Endothelial cell of umbilical vein (primary cell): ENCODE measurements at regions of chr14 and their contacts with region 1.

Region 1: DNA sequence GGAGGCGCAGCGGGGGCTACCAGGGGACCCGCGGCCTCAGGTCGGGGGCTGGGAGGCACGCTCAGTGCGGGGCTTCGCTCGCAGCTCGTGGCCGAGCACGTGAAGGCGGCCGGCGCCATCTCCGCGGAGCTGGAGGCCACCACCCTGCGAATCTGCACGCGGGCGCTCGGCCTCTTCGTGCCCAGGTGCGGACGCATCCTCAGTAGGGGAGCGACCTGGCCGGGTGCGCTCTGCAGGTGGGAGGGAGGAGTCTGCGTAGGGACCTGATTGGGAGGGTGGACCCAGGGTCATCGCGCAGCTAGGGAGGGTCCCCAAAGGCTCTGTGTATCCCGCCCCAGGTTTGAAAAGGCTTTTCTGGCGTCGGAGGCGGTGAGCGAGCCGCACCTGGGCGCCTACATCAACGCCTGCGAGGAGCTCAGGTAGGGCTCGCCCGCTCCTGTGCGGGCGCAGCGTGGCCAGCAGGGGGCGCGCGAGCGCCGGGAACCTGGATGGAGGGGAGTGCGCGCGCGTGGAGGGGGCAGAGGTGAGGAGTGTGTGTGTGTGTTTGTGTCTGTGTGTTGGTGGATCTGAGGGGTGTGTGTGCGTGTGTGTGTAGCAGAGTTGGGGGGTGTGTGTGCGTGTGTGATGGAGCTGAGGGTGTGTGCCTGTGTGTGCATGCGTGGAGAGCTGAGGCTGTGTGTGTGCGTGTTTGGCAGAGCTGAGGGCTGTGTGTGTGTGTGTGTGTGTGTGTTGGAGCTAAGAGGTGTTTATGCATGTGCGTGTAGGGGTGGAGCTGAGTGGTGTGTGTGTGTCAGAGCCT is 10.3 kb downstream of the EXOC3L4 start:
- DNase-seq: no peak
- H3K4me3 ChIP-seq: no peak overlapping the region
- H3K27ac ChIP-seq: no peak overlapping the region
- H3K4me1 ChIP-seq: peaks cover 3% of the 10 kb centered on the region
- H3K27me3 ChIP-seq: peaks cover 28 to 29% of the 10 kb centered on the region in 2 experiments
- CTCF ChIP-seq: peak; percentile 99
- POLR2A ChIP-seq: no peak

Region 2: GRCh38 chr14:103057365-103058096 is 47.3 kb before region 1 on chr14 and contains the start of gene CDC42BPB:
- CTCF ChIA-PET with region 1: interaction called, 10 read pairs
- POLR2A ChIA-PET with region 1: no interaction called
- dilution Hi-C with region 1: no loop called
- intact Hi-C with region 1: no loop called
- DNase-seq: peak; percentile 89
- H3K4me3 ChIP-seq: peak within 1 kb of the TSS; percentile 93 to 96 (median 95)
- H3K27ac ChIP-seq: peak within 1 kb of the TSS; percentile 91
- H3K4me1 ChIP-seq: peaks cover 22% of the 10 kb centered on the region
- H3K27me3 ChIP-seq: no peaks in the 10 kb centered on the region
- CTCF ChIP-seq: no peak
- POLR2A ChIP-seq: no peak
- total RNA-seq, gene CDC42BPB: 131 and 136 TPM in 2 replicates

Region 3: GRCh38 chr14:103121846-103122584 is 17.2 kb after region 1 on chr14:
- CTCF ChIA-PET with region 1: interaction called, 86 read pairs
- POLR2A ChIA-PET with region 1: interaction called, 6 read pairs
- dilution Hi-C with region 1: no loop called
- intact Hi-C with region 1: loop called (anchors 2 kb)
- DNase-seq: peak; percentile 73
- H3K4me3 ChIP-seq: no peak overlapping the region
- H3K27ac ChIP-seq: peak overlapping the region; percentile 42
- H3K4me1 ChIP-seq: peaks cover 32% of the 10 kb centered on the region
- H3K27me3 ChIP-seq: no peaks in the 10 kb centered on the region
- CTCF ChIP-seq: no peak
- POLR2A ChIP-seq: no peak

Region 4: DNA sequence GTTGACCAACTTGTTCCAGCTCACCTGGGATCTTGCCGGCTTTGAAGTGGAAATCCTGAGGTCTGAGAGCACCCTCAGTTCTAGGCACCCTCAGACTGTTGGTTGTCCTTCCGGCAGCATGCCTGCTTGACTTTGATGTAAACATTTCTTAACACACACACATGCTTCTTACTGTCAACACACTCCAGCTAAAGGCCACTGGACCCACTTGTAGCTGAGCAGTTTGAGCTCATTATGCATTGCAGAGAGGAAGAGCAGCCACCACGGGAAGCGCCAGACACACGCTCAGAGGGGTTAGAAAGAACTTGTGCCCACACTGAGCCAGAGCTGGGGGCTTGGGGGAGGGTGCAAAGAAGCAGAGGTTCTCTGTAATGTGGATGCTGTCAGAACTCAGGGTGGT is 74.2 kb after region 1 on chr14:
- CTCF ChIA-PET with region 1: interaction called, 238 read pairs
- POLR2A ChIA-PET with region 1: no interaction called
- dilution Hi-C with region 1: no loop called
- intact Hi-C with region 1: no loop called
- DNase-seq: no peak
- H3K4me3 ChIP-seq: no peak overlapping the region
- H3K27ac ChIP-seq: no peak overlapping the region
- H3K4me1 ChIP-seq: no peaks in the 10 kb centered on the region
- H3K27me3 ChIP-seq: peaks cover 7 to 10% of the 10 kb centered on the region in 2 experiments
- CTCF ChIP-seq: no peak
- POLR2A ChIP-seq: no peak

Region 5: GRCh38 chr14:103232298-103232808 is 127.5 kb after region 1 on chr14:
- CTCF ChIA-PET with region 1: interaction called, 18 read pairs
- POLR2A ChIA-PET with region 1: no interaction called
- dilution Hi-C with region 1: no loop called
- intact Hi-C with region 1: no loop called
- DNase-seq: no peak
- H3K4me3 ChIP-seq: no peak overlapping the region
- H3K27ac ChIP-seq: no peak overlapping the region
- H3K4me1 ChIP-seq: peaks cover 15% of the 10 kb centered on the region
- H3K27me3 ChIP-seq: no peaks in the 10 kb centered on the region
- CTCF ChIP-seq: no peak
- POLR2A ChIP-seq: no peak

Region 6: GRCh38 chr14:103298620-103299019 is 193.8 kb after region 1 on chr14:
- CTCF ChIA-PET with region 1: interaction called, 257 read pairs
- POLR2A ChIA-PET with region 1: no interaction called
- dilution Hi-C with region 1: no loop called
- intact Hi-C with region 1: no loop called
- DNase-seq: no peak
- H3K4me3 ChIP-seq: no peak overlapping the region
- H3K27ac ChIP-seq: no peak overlapping the region
- H3K4me1 ChIP-seq: no peaks in the 10 kb centered on the region
- H3K27me3 ChIP-seq: no peaks in the 10 kb centered on the region
- CTCF ChIP-seq: no peak
- POLR2A ChIP-seq: no peak

Region 7: DNA sequence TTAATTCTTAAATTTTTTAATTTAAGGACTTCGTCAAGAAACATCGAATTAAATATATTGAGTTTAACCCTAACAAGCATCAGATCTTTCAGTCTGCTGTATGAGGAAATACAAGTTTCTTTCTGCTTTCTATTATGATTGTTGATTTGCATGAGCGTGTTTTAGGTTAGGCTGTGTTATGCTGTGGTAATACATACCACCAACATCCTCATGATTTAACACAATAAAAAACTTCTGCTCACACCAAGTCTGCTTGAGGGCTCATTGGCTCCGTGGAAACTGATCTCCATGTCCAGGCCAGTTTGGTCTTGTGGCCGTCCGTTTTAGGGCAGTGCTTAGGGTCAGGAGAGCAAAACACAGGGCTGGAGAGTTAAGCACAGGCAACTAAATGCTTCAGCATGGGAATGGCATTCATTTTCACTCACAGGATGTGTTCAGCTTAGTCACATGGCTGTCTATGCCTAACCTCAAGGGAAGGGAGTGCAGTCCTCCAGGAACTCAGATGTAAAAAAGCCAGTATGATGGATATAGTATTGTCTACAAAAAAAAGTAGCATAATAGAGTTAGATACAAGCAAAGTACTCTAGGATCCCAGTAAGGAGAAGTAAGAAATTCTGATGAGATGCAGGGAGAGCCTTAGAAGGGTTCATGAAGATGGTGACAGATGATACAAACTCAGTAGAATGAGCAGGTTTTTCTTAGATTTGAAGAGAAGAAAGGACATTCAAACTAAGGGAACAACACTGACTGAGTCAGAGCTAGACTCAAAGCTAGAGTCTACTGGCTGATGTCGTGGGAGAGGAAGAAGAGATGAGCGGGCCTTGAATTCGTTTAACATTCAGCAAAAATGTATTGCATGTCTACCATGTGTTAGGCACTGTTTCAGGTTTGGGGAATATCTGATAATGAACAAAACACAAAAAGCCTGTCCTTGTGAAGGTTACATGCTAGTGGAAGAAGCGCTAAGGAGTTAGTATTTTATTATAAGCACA is 296.7 kb after region 1 on chr14:
- CTCF ChIA-PET with region 1: no interaction called
- POLR2A ChIA-PET with region 1: no interaction called
- dilution Hi-C with region 1: no loop called
- intact Hi-C with region 1: no loop called
- DNase-seq: peak; percentile 79
- H3K4me3 ChIP-seq: no peak overlapping the region
- H3K27ac ChIP-seq: peak overlapping the region; percentile 23
- H3K4me1 ChIP-seq: peaks cover 43% of the 10 kb centered on the region
- H3K27me3 ChIP-seq: no peaks in the 10 kb centered on the region
- CTCF ChIP-seq: no peak
- POLR2A ChIP-seq: no peak